Activated CD4-positive, alpha-beta T cell treated with anti-CD3 and anti-CD28 coated beads for 36 hours (primary cell): ENCODE measurements at regions of chr5 and their contacts with region 1.

Region 1: GRCh38 chr5:159915904-159916840 is at the start of gene ADRA1B:
- DNase-seq: peak; percentile 76
- ATAC-seq: peak; percentile 96
- H3K4me3 Mint-ChIP-seq: peak within 1 kb of the TSS; percentile 5
- H3K27ac Mint-ChIP-seq: no peak within 1 kb of the TSS
- H3K4me1 Mint-ChIP-seq: peaks cover 6% of the 10 kb centered on the region
- H3K27me3 Mint-ChIP-seq: peaks cover 46% of the 10 kb centered on the region
- total RNA-seq, gene ADRA1B: not detected

Region 2: GRCh38 chr5:159286420-159287035 is 629.6 kb before region 1 on chr5:
- CTCF ChIA-PET with region 1: interaction called, 3 read pairs
- POLR2A ChIA-PET with region 1: no interaction called
- intact Hi-C with region 1: loop called in 1 of 2 experiments (anchors 5 kb)
- DNase-seq: no peak
- ATAC-seq: peak; percentile 63
- H3K4me3 Mint-ChIP-seq: no peak overlapping the region
- H3K27ac Mint-ChIP-seq: no peak overlapping the region
- H3K4me1 Mint-ChIP-seq: no peaks in the 10 kb centered on the region
- H3K27me3 Mint-ChIP-seq: no peaks in the 10 kb centered on the region

Region 3: GRCh38 chr5:159331093-159331973 is 584.8 kb before region 1 on chr5:
- CTCF ChIA-PET with region 1: no interaction called
- POLR2A ChIA-PET with region 1: no interaction called
- intact Hi-C with region 1: loop called (anchors 2 to 5 kb)
- DNase-seq: peak; percentile 86
- ATAC-seq: peak; percentile 96
- H3K4me3 Mint-ChIP-seq: peak overlapping the region; percentile 62
- H3K27ac Mint-ChIP-seq: peak overlapping the region; percentile 76
- H3K4me1 Mint-ChIP-seq: peaks cover 15% of the 10 kb centered on the region
- H3K27me3 Mint-ChIP-seq: peaks cover 2% of the 10 kb centered on the region

Region 4: GRCh38 chr5:159928122-159928909 is 12.1 kb after region 1 on chr5:
- CTCF ChIA-PET with region 1: no interaction called
- POLR2A ChIA-PET with region 1: no interaction called
- intact Hi-C with region 1: no loop called
- DNase-seq: no peak
- ATAC-seq: no peak
- H3K4me3 Mint-ChIP-seq: no peak overlapping the region
- H3K27ac Mint-ChIP-seq: no peak overlapping the region
- H3K4me1 Mint-ChIP-seq: no peaks in the 10 kb centered on the region
- H3K27me3 Mint-ChIP-seq: peaks cover 28% of the 10 kb centered on the region

Region 5: GRCh38 chr5:159943326-159943725 is 27.2 kb after region 1 on chr5:
- CTCF ChIA-PET with region 1: no interaction called
- POLR2A ChIA-PET with region 1: no interaction called
- intact Hi-C with region 1: no loop called
- DNase-seq: no peak
- ATAC-seq: no peak
- H3K4me3 Mint-ChIP-seq: no peak overlapping the region
- H3K27ac Mint-ChIP-seq: no peak overlapping the region
- H3K4me1 Mint-ChIP-seq: no peaks in the 10 kb centered on the region
- H3K27me3 Mint-ChIP-seq: peaks cover 24% of the 10 kb centered on the region